Posterior cingulate gyrus (tissue), 11 donors: ENCODE measurements at regions of chr9 and their contacts with region 1.

Region 1: GRCh38 chr9:34546834-34547827 is 24.3 kb upstream of the ENHO start:
- DNase-seq: peak; percentile 58 to 96 (median 79)

Region 2: DNA sequence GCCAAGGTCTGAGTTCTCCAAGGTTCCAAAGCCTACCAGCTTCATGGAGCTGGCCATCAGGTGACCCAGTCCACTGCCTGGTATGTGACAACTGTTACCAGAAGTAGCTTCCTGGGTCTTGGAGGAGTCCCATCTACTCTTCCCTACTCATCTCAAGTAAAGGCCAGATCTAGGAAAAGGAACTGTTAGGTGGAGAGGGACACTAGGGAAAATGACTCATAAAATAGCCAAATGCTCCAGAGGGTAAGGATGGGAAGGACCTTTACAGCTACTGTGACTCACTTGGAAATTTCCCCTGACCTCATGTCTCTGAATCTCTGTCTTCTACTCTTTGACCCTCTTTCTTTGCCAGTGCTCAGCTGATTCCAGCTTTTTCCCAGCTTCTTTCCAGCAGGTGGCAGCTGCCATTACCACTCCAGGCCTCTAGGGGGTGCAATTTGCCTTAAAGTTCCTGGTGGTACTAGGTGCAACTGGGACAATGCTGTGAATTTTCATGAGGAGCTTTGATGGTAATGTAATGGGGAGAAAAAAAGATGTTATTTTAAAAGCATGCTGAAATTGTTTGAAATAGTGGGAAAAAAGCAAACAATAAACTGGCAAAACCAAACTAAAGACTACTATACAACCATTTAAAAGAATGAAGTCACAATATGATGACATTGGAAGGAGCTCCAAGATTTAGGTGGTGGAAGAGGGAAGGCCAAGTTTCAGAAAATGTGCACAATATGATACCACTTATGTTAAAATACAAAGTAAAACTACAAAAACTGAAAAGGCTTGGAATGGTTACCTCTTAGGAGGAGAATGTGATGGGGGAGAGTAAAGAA is 143.4 kb before region 1 on chr9:
- intact Hi-C with region 1: loop called (anchors 1 kb)
- DNase-seq: peak; percentile 59 to 95 (median 84)

Region 3: GRCh38 chr9:34437006-34437925 is 109.9 kb before region 1 on chr9:
- intact Hi-C with region 1: loop called (anchors 5 kb)
- DNase-seq: peak in 5 of 10 donors; percentile 31 to 82 (median 50)

Region 4: DNA sequence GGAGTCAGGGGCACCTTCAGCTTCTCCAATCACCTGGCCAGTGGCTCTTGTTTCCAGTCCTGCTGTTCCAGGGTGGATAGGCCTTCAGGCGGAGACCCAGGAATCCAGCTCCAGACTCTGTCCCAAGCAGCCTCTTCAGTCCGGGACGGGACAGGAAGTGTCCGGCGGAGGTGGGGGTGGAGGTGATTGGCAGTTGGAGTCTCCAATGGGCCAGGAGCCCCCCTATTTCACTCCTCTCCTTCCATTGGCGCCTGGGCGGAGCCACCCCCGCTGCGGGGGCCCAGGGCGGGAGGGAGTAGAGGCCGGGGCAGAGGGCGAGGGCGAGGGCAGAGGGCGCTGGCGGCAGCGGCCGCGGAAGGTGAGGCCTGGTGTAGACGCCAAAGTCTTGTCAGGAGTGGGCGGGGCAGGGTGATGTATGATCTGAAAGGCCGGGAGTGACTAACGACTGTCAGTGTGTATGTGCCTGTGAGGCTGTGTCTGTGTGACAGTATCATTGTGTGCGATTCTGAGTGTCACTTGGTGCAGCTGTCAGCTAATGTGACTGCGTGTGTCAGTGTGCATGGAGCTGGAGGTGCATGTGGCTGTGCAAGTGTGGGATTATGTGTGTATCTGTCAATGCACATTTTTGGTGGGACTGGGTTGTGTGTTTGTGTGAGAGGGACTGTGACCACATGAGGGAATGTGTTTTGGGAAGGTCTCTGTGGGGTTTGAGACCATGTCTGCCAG is 104.9 kb after region 1 on chr9 and contains the start of gene IL11RA:
- intact Hi-C with region 1: no loop called
- DNase-seq: peak; percentile 66 to 98 (median 82)